Calu3 (cell line): ENCODE measurements at regions of chr9 and their contacts with region 1.

Region 1: GRCh38 chr9:81689343-81690190 is at the start of gene TLE1:
- DNase-seq: peak; percentile 97
- H3K4me3 Mint-ChIP-seq: no peak within 1 kb of the TSS
- H3K27ac Mint-ChIP-seq: peak within 1 kb of the TSS; percentile 97
- H3K4me1 Mint-ChIP-seq: no peaks in the 10 kb centered on the region
- H3K27me3 Mint-ChIP-seq: no peaks in the 10 kb centered on the region
- CTCF ChIP-seq: no peak
- total RNA-seq, gene TLE1: 46.1 and 46.2 TPM in 2 replicates

Region 2: GRCh38 chr9:80417211-80417773 is 1272.3 kb before region 1 on chr9:
- CTCF ChIA-PET with region 1: no interaction called
- intact Hi-C with region 1: no loop called
- DNase-seq: no peak
- H3K4me3 Mint-ChIP-seq: no peak overlapping the region
- H3K27ac Mint-ChIP-seq: no peak overlapping the region
- H3K4me1 Mint-ChIP-seq: no peaks in the 10 kb centered on the region
- H3K27me3 Mint-ChIP-seq: no peaks in the 10 kb centered on the region
- CTCF ChIP-seq: no peak

Region 3: DNA sequence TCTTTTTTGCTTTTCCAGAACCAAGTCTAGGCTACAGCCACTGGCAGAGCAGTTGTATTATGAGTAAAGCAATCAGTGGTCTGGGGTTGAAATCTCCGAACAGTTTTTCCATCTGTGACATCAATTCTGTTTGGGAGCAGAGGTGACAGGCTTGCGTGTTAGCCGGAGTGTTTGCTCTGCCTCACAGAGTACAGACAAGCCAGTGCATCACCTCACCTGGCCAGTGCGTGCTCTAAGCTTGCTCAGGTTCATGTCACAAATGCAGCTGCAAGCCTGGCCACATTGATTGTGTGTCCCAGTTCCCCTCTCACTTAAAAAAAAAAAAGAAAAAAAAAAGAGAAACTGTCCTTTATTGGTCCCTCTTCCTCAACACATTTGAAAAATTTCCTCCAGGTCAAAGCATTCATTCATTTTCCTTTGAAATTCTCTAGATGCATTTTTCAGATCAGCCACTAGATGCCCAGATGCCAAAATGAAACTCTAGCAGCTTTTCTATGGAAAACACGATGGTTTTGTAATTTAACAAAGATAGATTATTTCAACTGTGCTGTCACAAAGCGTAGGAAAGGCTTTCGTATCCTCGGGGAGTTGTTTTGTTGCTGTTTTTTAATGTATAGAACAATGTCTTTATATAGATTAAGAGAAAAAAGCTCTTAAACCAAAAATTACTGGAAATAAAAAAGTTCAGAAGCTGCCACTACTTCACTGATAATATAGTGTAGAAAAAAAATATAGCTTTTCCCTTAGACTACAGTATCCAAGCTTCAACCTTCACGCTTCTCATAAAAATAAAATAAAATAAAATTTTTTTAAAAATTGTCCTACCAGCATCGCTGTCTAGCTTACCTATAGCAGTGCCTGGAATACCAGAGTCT is 585.7 kb before region 1 on chr9:
- CTCF ChIA-PET with region 1: no interaction called
- intact Hi-C with region 1: loop called (anchors 10 kb)
- DNase-seq: no peak
- H3K4me3 Mint-ChIP-seq: no peak overlapping the region
- H3K27ac Mint-ChIP-seq: no peak overlapping the region
- H3K4me1 Mint-ChIP-seq: peaks cover 9% of the 10 kb centered on the region
- H3K27me3 Mint-ChIP-seq: no peaks in the 10 kb centered on the region
- CTCF ChIP-seq: no peak

Region 4: GRCh38 chr9:81318549-81318948 is 371.0 kb before region 1 on chr9:
- CTCF ChIA-PET with region 1: no interaction called
- intact Hi-C with region 1: loop called (anchors 10 kb)
- DNase-seq: peak; percentile 10
- H3K4me3 Mint-ChIP-seq: no peak overlapping the region
- H3K27ac Mint-ChIP-seq: no peak overlapping the region
- H3K4me1 Mint-ChIP-seq: peaks cover 14% of the 10 kb centered on the region
- H3K27me3 Mint-ChIP-seq: no peaks in the 10 kb centered on the region
- CTCF ChIP-seq: no peak

Region 5: DNA sequence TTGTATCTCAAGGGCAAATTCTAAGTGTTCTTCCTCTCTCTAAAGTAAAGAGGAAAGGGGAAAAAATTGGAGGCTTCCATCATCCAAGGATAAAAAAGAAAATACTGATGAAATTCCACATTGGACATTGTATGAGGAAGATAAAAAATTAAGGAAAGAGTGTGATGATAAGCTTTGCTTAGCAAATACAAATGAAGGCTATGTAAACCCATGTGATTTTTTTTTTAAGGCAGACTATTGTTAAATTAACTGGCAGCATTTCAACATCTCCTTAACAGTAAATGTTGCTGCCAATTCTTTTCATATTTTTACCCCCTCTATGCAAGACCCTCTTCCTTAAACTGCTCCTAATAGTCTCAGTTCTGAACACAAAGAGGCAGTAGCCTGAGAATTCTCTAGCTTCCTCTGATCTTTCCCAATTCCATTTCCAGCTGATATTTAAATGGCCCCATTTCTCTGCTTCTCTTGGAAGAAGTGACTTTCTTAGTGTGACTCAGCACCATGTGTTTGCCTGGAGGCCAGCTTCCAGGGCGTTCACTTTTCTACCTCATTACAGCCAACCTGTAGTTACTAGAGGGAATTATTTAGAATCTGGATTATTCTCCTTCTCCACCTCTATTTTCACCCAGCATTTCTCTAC is 159.9 kb before region 1 on chr9:
- CTCF ChIA-PET with region 1: no interaction called
- intact Hi-C with region 1: loop called (anchors 10 kb)
- DNase-seq: peak; percentile 11
- H3K4me3 Mint-ChIP-seq: no peak overlapping the region
- H3K27ac Mint-ChIP-seq: peak overlapping the region; percentile 45
- H3K4me1 Mint-ChIP-seq: peaks cover 17% of the 10 kb centered on the region
- H3K27me3 Mint-ChIP-seq: no peaks in the 10 kb centered on the region
- CTCF ChIP-seq: no peak

Region 6: GRCh38 chr9:81574405-81574804 is 115.2 kb before region 1 on chr9:
- CTCF ChIA-PET with region 1: no interaction called
- intact Hi-C with region 1: no loop called
- DNase-seq: no peak
- H3K4me3 Mint-ChIP-seq: no peak overlapping the region
- H3K27ac Mint-ChIP-seq: no peak overlapping the region
- H3K4me1 Mint-ChIP-seq: no peaks in the 10 kb centered on the region
- H3K27me3 Mint-ChIP-seq: no peaks in the 10 kb centered on the region
- CTCF ChIP-seq: no peak

Region 7: DNA sequence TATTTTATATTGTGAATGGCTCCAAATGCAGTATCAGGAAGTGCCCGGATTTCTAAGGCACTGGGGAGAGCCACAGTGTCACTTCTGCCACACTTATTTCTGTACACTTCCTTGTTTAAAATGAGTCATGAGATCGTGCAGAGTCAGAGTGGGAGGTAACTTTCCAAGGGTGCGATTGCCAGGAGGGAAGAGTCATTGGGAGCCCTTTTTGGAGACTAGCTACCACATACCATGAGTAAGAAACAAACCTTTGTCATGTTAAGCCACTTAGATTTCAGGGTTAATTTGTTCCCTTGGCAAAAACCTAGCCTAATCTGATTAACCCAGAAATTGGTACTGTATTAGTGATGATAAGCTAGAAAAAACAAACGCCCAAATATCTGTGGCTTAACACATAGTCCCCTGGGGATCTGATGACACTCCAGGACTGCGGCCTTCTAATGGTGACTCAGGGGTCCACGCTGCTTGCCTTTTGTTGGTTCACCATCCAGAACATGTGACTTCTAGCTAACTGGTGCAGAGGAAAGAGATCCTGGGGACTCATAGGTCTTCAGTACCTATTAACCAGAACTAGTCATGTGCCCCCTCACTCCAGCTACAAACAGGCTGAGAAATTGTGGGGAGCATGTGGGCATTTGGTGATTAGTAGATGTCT is 48.4 kb after region 1 on chr9:
- CTCF ChIA-PET with region 1: no interaction called
- intact Hi-C with region 1: loop called (anchors 5 kb)
- DNase-seq: peak; percentile 68
- H3K4me3 Mint-ChIP-seq: peak overlapping the region; percentile 13
- H3K27ac Mint-ChIP-seq: peak overlapping the region; percentile 97
- H3K4me1 Mint-ChIP-seq: peaks cover 23% of the 10 kb centered on the region
- H3K27me3 Mint-ChIP-seq: no peaks in the 10 kb centered on the region
- CTCF ChIP-seq: no peak

Region 8: DNA sequence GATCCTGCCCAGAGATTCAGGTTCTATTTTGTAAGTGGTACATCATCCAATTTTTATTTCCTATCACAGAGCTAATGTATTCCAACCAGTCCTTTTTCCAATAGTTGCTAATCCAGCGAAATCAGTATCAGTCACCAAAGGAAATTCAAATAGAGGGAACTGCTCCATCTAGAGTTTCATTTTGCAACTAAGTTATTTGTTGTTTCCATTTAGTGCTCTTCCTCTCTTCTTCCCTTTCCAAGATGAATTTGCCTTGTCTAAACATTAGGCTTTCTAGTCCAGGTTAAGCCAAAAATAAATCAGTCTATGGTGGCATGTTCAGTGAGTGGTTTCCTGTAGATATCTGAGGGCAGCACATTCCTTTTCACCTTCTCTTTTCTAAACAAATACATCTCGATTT is 158.9 kb after region 1 on chr9:
- CTCF ChIA-PET with region 1: interaction called, 5 read pairs
- intact Hi-C with region 1: loop called (anchors 2 kb)
- DNase-seq: no peak
- H3K4me3 Mint-ChIP-seq: no peak overlapping the region
- H3K27ac Mint-ChIP-seq: no peak overlapping the region
- H3K4me1 Mint-ChIP-seq: no peaks in the 10 kb centered on the region
- H3K27me3 Mint-ChIP-seq: no peaks in the 10 kb centered on the region
- CTCF ChIP-seq: peak; percentile 15

Region 9: DNA sequence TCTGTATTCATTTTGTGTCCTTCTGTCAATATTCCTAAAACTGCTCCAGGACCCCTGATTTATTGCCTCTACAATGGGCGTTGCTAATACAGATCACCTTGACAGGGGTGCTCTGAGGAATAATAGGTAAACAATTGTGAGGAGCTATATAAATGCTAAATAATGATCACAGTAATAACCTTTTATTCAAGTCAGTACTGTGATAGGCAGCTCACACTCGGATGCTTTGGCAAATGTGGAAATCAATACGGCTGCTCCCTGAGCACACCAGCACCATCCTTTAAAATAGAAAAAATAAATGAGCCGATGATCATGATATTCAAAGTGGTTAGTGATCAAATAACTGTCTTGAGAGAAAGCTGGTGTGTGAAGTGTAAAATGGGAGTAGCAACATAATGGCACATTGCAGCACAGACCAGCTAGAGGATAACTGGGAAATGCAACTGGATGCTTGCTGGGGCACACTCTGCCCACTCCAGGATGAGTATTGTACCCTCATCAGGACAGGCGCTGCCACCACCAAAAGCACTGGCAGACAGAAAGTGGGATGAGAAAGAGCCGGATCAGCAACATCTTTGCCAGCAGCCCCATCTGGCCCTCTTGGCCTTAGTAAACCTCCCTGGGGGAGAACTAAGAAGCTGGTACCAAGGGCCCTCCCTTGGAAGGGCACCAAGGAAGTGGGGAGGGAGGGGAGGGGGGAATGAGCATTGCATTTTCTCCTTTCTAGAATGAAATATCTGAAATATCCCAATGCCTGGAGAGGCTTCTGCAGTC is 169.3 kb after region 1 on chr9:
- CTCF ChIA-PET with region 1: no interaction called
- intact Hi-C with region 1: no loop called
- DNase-seq: no peak
- H3K4me3 Mint-ChIP-seq: no peak overlapping the region
- H3K27ac Mint-ChIP-seq: no peak overlapping the region
- H3K4me1 Mint-ChIP-seq: no peaks in the 10 kb centered on the region
- H3K27me3 Mint-ChIP-seq: no peaks in the 10 kb centered on the region
- CTCF ChIP-seq: no peak

Region 10: GRCh38 chr9:81989700-81990099 is 300.1 kb after region 1 on chr9:
- CTCF ChIA-PET with region 1: no interaction called
- intact Hi-C with region 1: no loop called
- DNase-seq: no peak
- H3K4me3 Mint-ChIP-seq: no peak overlapping the region
- H3K27ac Mint-ChIP-seq: no peak overlapping the region
- H3K4me1 Mint-ChIP-seq: no peaks in the 10 kb centered on the region
- H3K27me3 Mint-ChIP-seq: peaks cover 41% of the 10 kb centered on the region
- CTCF ChIP-seq: no peak